Gastrocnemius medialis (tissue), 4 donors: ENCODE measurements at regions of chr1 and their contacts with region 1.

Region 1: DNA sequence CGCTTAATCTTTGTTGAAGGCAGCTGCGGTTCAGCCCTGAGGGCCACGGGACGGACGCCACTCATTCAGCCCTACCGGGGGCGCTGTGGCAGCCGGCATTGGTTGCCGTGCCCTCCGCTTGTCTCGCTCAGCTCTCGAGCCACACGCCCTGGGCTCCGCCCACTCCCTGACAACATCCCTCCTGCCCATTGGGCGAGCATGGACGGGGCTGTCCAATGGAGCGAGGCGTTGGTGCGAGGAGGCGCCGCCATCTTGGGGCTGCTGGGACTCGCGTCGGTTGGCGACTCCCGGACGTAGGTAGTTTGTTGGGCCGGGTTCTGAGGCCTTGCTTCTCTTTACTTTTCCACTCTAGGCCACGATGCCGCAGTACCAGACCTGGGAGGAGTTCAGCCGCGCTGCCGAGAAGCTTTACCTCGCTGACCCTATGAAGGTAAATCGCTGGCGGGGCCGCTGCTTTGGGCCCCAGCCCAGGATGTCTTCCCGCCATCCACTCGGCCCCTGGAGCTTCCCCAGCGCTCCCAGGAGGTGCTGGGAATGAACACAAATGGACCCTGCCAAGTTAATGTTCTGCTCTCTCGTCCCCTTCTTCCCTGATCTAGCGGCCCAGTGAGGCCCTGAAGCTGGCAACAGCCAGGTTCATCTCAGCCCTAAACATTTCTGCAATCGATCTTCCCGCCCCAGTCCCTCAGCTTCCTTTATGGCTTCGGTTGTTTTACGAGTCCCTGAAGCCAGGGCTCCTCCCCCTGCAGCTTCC is at the start of gene SRP9:
- DNase-seq: peak; percentile 98 to 99
- ATAC-seq: peak; percentile 97 to 98
- H3K4me3 ChIP-seq: peak within 1 kb of the TSS; percentile 78 to 98 (median 86)
- H3K27ac ChIP-seq: peak within 1 kb of the TSS; percentile 94 to 96 (median 95)
- H3K4me1 ChIP-seq: peaks cover 50% of the 10 kb centered on the region in 2 donors
- H3K27me3 ChIP-seq: no peaks in the 10 kb centered on the region
- CTCF ChIP-seq: peak; percentile 85 to 95 (median 89)
- POLR2A ChIP-seq: peak; percentile 73 to 85
- total RNA-seq, gene SRP9: 182 to 207 (median 198) TPM

Region 2: GRCh38 chr1:225480825-225481434 is 296.8 kb before region 1 on chr1:
- in situ Hi-C with region 1: loop called in 2 of 4 experiments (anchors 5 kb)
- intact Hi-C with region 1: no loop called
- DNase-seq: peak in 1 of 2 donors; percentile 42
- ATAC-seq: peak; percentile 48 to 71
- H3K4me3 ChIP-seq: no peak overlapping the region
- H3K27ac ChIP-seq: no peak overlapping the region
- H3K4me1 ChIP-seq: peaks cover 0 to 4% of the 10 kb centered on the region in 2 donors
- H3K27me3 ChIP-seq: no peaks in the 10 kb centered on the region
- CTCF ChIP-seq: peak; percentile 57 to 80 (median 63)
- POLR2A ChIP-seq: no peak

Region 3: GRCh38 chr1:225809842-225810578 is 32.2 kb after region 1 on chr1 and contains the start of gene EPHX1:
- in situ Hi-C with region 1: no loop called
- intact Hi-C with region 1: loop called (anchors 1 kb)
- DNase-seq: peak; percentile 82 to 85
- ATAC-seq: peak; percentile 73 to 80
- H3K4me3 ChIP-seq: peak within 1 kb of the TSS; percentile 69 to 89 (median 75)
- H3K27ac ChIP-seq: peak within 1 kb of the TSS; percentile 94 to 97 (median 96)
- H3K4me1 ChIP-seq: peaks cover 39 to 50% of the 10 kb centered on the region in 2 donors
- H3K27me3 ChIP-seq: no peaks in the 10 kb centered on the region
- CTCF ChIP-seq: peak; percentile 25 to 55 (median 43)
- POLR2A ChIP-seq: peak; percentile 82 to 91
- total RNA-seq, gene EPHX1: 65.7 to 155 (median 108) TPM

Region 4: GRCh38 chr1:225845571-225846259 is 68.0 kb after region 1 on chr1:
- in situ Hi-C with region 1: loop called in 1 of 4 experiments (anchors 10 kb)
- intact Hi-C with region 1: loop called (anchors 1 kb)
- DNase-seq: peak; percentile 52 to 74
- ATAC-seq: peak; percentile 49 to 83
- H3K4me3 ChIP-seq: no peak overlapping the region
- H3K27ac ChIP-seq: peak overlapping the region; percentile 15 to 61 (median 38)
- H3K4me1 ChIP-seq: peaks cover 3 to 5% of the 10 kb centered on the region in 2 donors
- H3K27me3 ChIP-seq: no peaks in the 10 kb centered on the region
- CTCF ChIP-seq: peak; percentile 62 to 83 (median 79)
- POLR2A ChIP-seq: no peak

Region 5: GRCh38 chr1:225977937-225978748 is 200.4 kb after region 1 on chr1:
- in situ Hi-C with region 1: loop called in 3 of 4 experiments (anchors 10 kb)
- intact Hi-C with region 1: loop called (anchors 2 kb)
- DNase-seq: no peak
- ATAC-seq: no peak
- H3K4me3 ChIP-seq: no peak overlapping the region
- H3K27ac ChIP-seq: no peak overlapping the region
- H3K4me1 ChIP-seq: peaks cover 13 to 17% of the 10 kb centered on the region in 2 donors
- H3K27me3 ChIP-seq: no peaks in the 10 kb centered on the region
- CTCF ChIP-seq: no peak
- POLR2A ChIP-seq: no peak